ENCODE measurements at regions of chr5 and their contacts with region 1.

Region 1: DNA sequence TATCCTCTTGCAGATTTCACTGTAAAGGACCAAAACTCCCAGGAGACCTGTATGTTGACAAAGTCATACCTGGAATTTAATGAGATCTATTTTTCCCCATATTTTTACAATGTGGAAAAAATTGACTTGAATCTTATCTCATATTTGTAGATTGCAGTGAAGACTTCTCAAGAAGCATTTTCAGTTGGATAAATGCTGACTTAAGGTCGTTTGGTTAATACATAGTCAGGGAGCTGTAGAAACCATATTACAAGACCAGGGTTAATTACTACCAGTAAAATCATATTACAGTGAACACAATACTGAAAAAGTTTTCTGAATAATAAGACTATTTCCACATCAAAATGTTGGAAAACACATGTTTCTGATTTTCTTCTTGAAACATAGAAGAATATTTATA is 119.8 kb downstream of the ATG10 start:
- DNase-seq: no peak
- H3K4me3 ChIP-seq: no peak overlapping the region
- H3K27ac ChIP-seq: no peak overlapping the region
- H3K4me1 ChIP-seq: no peaks in the 10 kb centered on the region
- H3K27me3 ChIP-seq: no peaks in the 10 kb centered on the region
- CTCF ChIP-seq: no peak
- EP300 ChIP-seq: no peak
- RAD21 ChIP-seq: no peak

Region 2: DNA sequence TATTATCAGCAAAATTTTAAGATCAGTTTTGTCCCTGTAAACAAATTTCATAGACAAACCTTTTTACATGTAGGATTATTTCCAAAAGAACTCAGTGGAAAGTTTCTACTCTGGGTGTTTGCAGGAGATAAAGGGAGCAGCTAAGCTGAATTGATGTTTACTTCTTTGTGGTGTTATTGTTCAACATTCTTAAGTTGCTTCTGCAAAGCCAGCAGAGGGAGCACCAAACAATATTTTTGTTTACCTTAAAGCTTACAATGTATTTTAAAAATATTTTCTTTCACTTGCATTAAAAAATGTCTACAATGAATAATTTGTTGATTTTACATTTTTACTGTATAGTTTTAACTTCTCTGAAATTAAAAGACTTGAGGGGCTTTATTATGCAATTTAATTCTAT is 15.7 kb after region 1 on chr5:
- CTCF ChIA-PET with region 1: interaction called, 10 read pairs
- POLR2A ChIA-PET with region 1: no interaction called
- DNase-seq: no peak
- H3K4me3 ChIP-seq: no peak overlapping the region
- H3K27ac ChIP-seq: no peak overlapping the region
- H3K4me1 ChIP-seq: peaks cover 4 to 14% of the 10 kb centered on the region in 2 experiments; a peak in 2 of 4 replicates
- H3K27me3 ChIP-seq: no peaks in the 10 kb centered on the region
- CTCF ChIP-seq: peak; percentile 61
- EP300 ChIP-seq: no peak
- RAD21 ChIP-seq: peak; percentile 58

Measured in SK-N-SH (cell line).